Mammary epithelial cell (primary cell): ENCODE measurements at regions of chr7 and their contacts with region 1.

Region 1: GRCh38 chr7:105689067-105689964 is 108.0 kb upstream of the EFCAB10 start:
- DNase-seq: no peak
- H3K4me3 ChIP-seq: no peak overlapping the region
- H3K27ac ChIP-seq: no peak overlapping the region
- H3K4me1 ChIP-seq: no peaks in the 10 kb centered on the region
- H3K27me3 ChIP-seq: no peaks in the 10 kb centered on the region
- CTCF ChIP-seq: no peak

Region 2: GRCh38 chr7:105589356-105590077 is 99.8 kb before region 1 on chr7:
- CTCF ChIA-PET with region 1: no interaction called
- dilution Hi-C with region 1: loop called (anchors 5 kb)
- in situ Hi-C with region 1: no loop called
- intact Hi-C with region 1: no loop called
- DNase-seq: peak; percentile 76
- H3K4me3 ChIP-seq: no peak overlapping the region
- H3K27ac ChIP-seq: no peak overlapping the region
- H3K4me1 ChIP-seq: no peaks in the 10 kb centered on the region
- H3K27me3 ChIP-seq: no peaks in the 10 kb centered on the region
- CTCF ChIP-seq: peak; percentile 74 to 83

Region 3: DNA sequence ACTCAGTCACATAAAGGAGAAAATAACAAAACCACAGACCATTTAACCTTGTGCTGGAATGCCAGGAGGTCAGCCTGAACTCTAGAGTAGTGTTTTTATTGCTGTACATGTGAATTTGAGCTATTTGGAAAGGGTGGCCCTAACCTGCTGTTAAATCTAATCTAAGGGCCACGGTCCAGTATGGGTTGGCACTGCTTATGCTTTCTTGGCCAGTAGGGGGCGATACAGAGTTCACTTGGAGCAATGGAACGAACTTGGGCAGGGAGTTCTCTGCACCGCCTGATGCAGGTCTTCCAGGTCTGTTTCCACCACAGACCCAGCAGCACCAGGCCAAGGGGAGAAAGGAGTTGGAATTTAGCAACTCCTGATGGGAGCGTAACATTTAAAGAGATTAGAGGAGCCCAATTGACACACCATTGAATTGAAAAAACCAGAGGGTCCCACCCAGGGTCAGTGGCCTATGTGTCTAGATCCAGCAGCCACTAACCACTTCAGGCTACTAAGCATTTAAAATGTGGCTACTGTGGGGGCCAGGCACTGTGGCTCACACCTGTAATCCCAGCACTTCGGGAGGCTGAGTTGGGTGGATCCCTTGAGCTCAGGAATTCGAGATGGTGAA is 32.3 kb before region 1 on chr7:
- CTCF ChIA-PET with region 1: no interaction called
- dilution Hi-C with region 1: no loop called
- in situ Hi-C with region 1: no loop called
- intact Hi-C with region 1: no loop called
- DNase-seq: no peak
- H3K4me3 ChIP-seq: no peak overlapping the region
- H3K27ac ChIP-seq: no peak overlapping the region
- H3K4me1 ChIP-seq: no peaks in the 10 kb centered on the region
- H3K27me3 ChIP-seq: no peaks in the 10 kb centered on the region
- CTCF ChIP-seq: peak; percentile 76 to 86